Activated naive CD8-positive, alpha-beta T cell treated with anti-CD3 and anti-CD28 coated beads, Interleukin-2, amount 10 ng/mL, durations not matched to agents 7 days and 5 days (primary cell): ENCODE measurements at regions of chr17 and their contacts with region 1.

Region 1: GRCh38 chr17:42609182-42609813 is at the starts of genes RETREG3 and TUBG1:
- DNase-seq: peak; percentile 99
- ATAC-seq: peak; percentile 93
- H3K4me3 Mint-ChIP-seq: peak within 1 kb of the TSS; percentile 98
- H3K27ac Mint-ChIP-seq: peak within 1 kb of the TSS; percentile 94
- H3K4me1 Mint-ChIP-seq: peaks cover 34% of the 10 kb centered on the region
- H3K27me3 Mint-ChIP-seq: no peaks in the 10 kb centered on the region
- total RNA-seq, gene RETREG3: 82.2 to 82.3 TPM
- total RNA-seq, gene TUBG1: 55.6 to 57.6 TPM

Region 2: DNA sequence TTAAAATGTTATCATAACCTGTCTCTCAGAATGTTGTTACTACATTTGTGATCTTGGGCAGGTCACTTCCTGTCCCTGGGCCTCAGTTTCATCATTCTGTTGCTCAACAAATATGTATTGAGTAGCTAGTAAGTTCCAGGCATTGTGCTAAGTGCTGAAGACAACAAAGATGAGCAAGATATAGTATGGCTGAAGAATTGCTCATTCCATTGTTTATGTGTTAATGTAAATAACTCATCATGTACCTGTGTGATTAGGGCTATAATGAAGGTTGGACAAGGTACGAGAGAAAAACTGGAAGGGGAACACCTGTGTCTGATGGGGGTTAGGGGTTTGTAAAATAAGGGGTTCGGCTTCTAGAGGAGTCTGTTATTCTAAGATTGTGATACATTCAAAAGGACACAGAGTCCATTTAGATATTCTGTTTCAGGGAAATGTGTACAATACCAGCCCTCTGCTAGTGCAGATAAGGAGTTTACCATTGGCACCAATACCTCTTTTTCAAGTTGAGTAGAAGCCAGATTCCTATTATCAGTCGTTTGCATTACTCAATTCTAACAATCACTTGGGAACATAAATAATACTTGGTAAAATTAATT is 20.2 kb after region 1 on chr17:
- POLR2A ChIA-PET with region 1: no interaction called
- DNase-seq: no peak
- ATAC-seq: no peak
- H3K4me3 Mint-ChIP-seq: no peak overlapping the region
- H3K27ac Mint-ChIP-seq: no peak overlapping the region
- H3K4me1 Mint-ChIP-seq: no peaks in the 10 kb centered on the region
- H3K27me3 Mint-ChIP-seq: no peaks in the 10 kb centered on the region

Region 3: DNA sequence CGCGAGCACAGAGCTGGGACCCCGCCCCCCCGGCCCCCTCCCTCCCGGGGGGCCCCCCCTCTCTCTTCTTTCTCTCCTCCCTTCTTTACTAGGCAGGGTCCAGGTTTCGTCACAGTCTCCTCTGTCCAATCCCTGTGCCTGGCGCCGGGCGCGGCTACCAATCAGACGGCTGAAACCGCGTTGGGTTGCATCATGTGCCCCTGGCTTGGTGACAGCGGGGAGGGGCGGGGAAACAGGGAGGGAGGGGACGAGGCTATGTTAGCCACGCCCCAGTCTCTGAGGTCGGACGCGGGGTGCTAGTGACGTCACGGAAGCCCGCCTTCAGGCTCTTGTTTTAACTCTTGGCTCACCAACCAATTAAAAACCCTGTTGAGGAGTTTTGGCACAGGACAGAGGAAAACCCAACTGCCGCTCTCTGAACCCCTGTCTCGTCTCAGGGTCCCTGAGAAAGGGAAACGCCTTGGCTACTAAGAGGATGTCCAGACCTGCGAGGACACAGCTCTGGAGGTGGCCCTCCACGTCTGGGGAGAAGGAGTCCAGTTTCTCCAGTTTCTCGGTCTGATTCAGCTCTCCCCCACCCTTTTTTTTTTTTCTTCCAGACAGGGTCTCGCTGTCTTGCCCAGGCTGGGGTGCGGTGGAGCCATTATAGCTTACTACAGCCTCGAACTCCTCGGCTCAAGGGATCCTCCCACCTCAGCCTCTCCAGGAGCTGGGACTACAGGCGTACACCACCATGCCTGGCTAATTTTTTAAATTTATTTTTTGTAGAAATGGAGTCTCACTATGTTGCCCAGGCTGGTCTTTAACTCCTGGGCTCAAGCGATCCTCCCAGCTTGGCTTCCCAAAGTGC is 67.9 kb after region 1 on chr17:
- POLR2A ChIA-PET with region 1: interaction called, 40 read pairs
- DNase-seq: peak; percentile 94
- ATAC-seq: peak; percentile 84
- H3K4me3 Mint-ChIP-seq: peak overlapping the region; percentile 93
- H3K27ac Mint-ChIP-seq: peak overlapping the region; percentile 67
- H3K4me1 Mint-ChIP-seq: peaks cover 45% of the 10 kb centered on the region
- H3K27me3 Mint-ChIP-seq: peaks cover 46% of the 10 kb centered on the region